ENCODE measurements at regions of chr3 and their contacts with region 1.

Region 1: GRCh38 chr3:155382396-155383042 is 89.0 kb upstream of the STRIT1 start:
- DNase-seq: peak; percentile 69
- H3K4me3 ChIP-seq: peak overlapping the region in 1 of 2 experiments; percentile 32; a peak in 1 of 4 replicates
- H3K27ac ChIP-seq: peak overlapping the region in 1 of 2 experiments; percentile 67; a peak in 1 of 4 replicates
- H3K4me1 ChIP-seq: peaks cover 0 to 20% of the 10 kb centered on the region in 2 experiments; a peak in 1 of 4 replicates
- H3K27me3 ChIP-seq: no peaks in the 10 kb centered on the region
- CTCF ChIP-seq: peak; percentile 85
- EP300 ChIP-seq: no peak
- RAD21 ChIP-seq: peak; percentile 99

Region 2: GRCh38 chr3:155334914-155335723 is 47.4 kb before region 1 on chr3:
- CTCF ChIA-PET with region 1: interaction called, 13 read pairs
- POLR2A ChIA-PET with region 1: no interaction called
- DNase-seq: peak; percentile 19
- H3K4me3 ChIP-seq: no peak overlapping the region; a peak in 1 of 4 replicates
- H3K27ac ChIP-seq: peak overlapping the region in 1 of 2 experiments; percentile 98; a peak in 2 of 4 replicates
- H3K4me1 ChIP-seq: peaks cover 0 to 55% of the 10 kb centered on the region in 2 experiments; a peak in 2 of 4 replicates
- H3K27me3 ChIP-seq: no peaks in the 10 kb centered on the region
- CTCF ChIP-seq: no peak
- EP300 ChIP-seq: peak in 1 of 2 experiments; percentile 65; a peak in 2 of 4 replicates
- RAD21 ChIP-seq: no peak; the same call in 1 of the 2 replicates

Region 3: GRCh38 chr3:155352900-155353490 is 29.5 kb before region 1 on chr3:
- CTCF ChIA-PET with region 1: interaction called, 17 read pairs
- POLR2A ChIA-PET with region 1: no interaction called
- DNase-seq: peak; percentile 31
- H3K4me3 ChIP-seq: no peak overlapping the region
- H3K27ac ChIP-seq: no peak overlapping the region; a peak in 1 of 4 replicates
- H3K4me1 ChIP-seq: no peaks in the 10 kb centered on the region; a peak in 1 of 4 replicates
- H3K27me3 ChIP-seq: no peaks in the 10 kb centered on the region
- CTCF ChIP-seq: peak; percentile 71
- EP300 ChIP-seq: no peak
- RAD21 ChIP-seq: peak; percentile 76

Region 4: DNA sequence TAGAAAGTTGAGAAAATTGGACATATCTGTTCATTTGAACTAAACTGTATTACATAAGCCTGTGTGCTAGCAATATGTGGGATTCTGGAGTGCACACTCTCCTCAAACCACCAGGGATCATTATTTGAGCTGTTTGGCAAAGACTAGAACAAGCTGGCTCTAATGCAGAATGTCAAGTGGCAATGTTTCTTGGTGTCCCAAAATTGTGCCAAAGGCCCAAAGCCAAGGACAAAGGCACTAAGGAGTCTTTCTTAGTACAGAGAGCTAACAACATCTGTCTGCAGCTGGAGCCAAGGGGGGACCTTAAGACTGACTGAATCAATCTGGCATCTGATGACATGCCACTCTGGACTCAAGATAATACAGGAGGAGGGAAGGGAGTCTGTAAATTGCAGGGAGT is 12.3 kb before region 1 on chr3:
- CTCF ChIA-PET with region 1: interaction called, 15 read pairs
- POLR2A ChIA-PET with region 1: interaction called, 3 read pairs
- DNase-seq: no peak
- H3K4me3 ChIP-seq: no peak overlapping the region
- H3K27ac ChIP-seq: no peak overlapping the region
- H3K4me1 ChIP-seq: peaks cover 0 to 3% of the 10 kb centered on the region in 2 experiments; a peak in 1 of 4 replicates
- H3K27me3 ChIP-seq: no peaks in the 10 kb centered on the region
- CTCF ChIP-seq: no peak
- EP300 ChIP-seq: no peak
- RAD21 ChIP-seq: no peak

Region 5: DNA sequence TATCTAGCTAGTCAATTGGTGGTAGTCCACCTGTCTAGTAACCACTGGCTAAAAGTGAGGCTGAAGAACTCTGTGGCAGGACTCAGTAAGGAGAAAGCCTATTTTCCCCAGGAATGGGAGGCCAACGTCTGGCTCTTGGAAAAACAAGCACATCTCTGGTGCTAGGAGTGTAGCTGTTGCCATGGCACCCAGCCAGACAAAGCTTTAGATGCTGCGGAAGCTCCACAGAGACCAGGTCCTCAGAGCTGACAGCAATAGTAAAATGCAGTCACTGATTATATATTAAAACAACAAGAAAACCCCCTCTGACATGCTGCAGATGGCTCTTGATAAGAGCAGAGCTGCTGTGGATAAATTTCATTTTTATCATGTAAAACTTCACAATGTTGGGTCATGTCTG is 35.9 kb after region 1 on chr3:
- CTCF ChIA-PET with region 1: interaction called, 15 read pairs
- POLR2A ChIA-PET with region 1: no interaction called
- DNase-seq: peak; percentile 68
- H3K4me3 ChIP-seq: no peak overlapping the region
- H3K27ac ChIP-seq: peak overlapping the region in 1 of 2 experiments; percentile 99; a peak in 2 of 4 replicates
- H3K4me1 ChIP-seq: peaks cover 0 to 27% of the 10 kb centered on the region in 2 experiments; a peak in 2 of 4 replicates
- H3K27me3 ChIP-seq: no peaks in the 10 kb centered on the region
- CTCF ChIP-seq: no peak
- EP300 ChIP-seq: peak in 1 of 2 experiments; percentile 97; a peak in 2 of 4 replicates
- RAD21 ChIP-seq: no peak; the same call in none of the 2 replicates

Region 6: GRCh38 chr3:155712008-155712407 is 329.5 kb after region 1 on chr3:
- CTCF ChIA-PET with region 1: interaction called, 15 read pairs
- POLR2A ChIA-PET with region 1: no interaction called
- DNase-seq: no peak
- H3K4me3 ChIP-seq: no peak overlapping the region
- H3K27ac ChIP-seq: no peak overlapping the region
- H3K4me1 ChIP-seq: no peaks in the 10 kb centered on the region; a peak in 1 of 4 replicates
- H3K27me3 ChIP-seq: no peaks in the 10 kb centered on the region
- CTCF ChIP-seq: no peak
- EP300 ChIP-seq: no peak
- RAD21 ChIP-seq: no peak

Measured in SK-N-SH (cell line).